Activated naive CD4-positive, alpha-beta T cell treated with anti-CD3 and anti-CD28 coated beads for 36 hours (primary cell): ENCODE measurements at regions of chr1 and their contacts with region 1.

Region 1: GRCh38 chr1:172745014-172745413 is 86.1 kb downstream of the FASLG start:
- DNase-seq: peak; percentile 64
- H3K4me3 Mint-ChIP-seq: no peak overlapping the region
- H3K27ac Mint-ChIP-seq: no peak overlapping the region
- H3K4me1 Mint-ChIP-seq: peaks cover 38% of the 10 kb centered on the region
- H3K27me3 Mint-ChIP-seq: no peaks in the 10 kb centered on the region

Region 2: DNA sequence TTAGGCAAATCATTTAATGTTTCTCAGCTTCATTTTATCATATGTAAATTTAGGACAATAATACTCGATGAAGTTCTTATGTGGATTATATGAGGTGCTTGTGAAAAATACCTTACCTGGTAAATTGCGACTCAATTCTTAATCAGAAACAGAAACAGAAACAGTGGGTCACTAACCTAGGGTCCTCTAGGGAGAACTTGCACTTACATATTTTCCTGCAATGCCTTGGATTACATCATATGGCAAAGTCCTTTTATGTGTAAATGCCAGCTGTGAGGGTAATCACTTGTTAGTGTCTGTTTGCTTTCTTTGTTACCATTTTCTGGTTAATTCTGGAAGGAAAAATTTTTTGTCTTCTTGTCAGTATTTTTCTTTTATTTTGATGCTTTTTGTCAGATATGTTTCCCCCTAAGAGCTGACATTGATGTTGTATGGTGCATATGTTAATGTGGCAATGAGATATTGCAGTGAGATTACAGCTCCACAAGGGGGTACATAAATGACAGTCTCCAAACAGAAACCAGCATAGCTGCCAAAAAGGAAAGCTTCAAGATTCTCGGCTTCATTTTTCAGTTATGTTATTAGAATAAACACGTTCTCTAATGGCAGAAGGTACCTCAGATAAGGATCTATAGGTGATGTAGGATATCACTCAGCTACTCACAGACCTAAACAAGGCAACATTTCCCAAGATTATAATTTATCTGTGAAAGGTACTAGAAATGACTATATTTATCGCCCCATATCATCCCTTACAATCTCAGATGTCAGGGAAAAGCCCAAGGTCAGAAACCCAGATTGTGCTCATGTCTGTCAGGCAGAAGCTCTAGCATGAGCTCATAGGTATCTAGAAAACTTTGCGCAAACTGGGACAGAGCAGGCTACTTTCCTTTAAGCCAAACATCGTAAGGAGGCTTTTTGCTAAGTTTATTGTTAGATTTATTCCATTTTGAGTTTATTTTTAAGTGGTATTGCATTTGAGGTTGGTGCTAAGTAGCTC is 33.7 kb after region 1 on chr1:
- CTCF ChIA-PET with region 1: interaction called, 16 read pairs
- intact Hi-C with region 1: loop called (anchors 1 kb)
- DNase-seq: no peak
- H3K4me3 Mint-ChIP-seq: no peak overlapping the region
- H3K27ac Mint-ChIP-seq: no peak overlapping the region
- H3K4me1 Mint-ChIP-seq: peaks cover 16% of the 10 kb centered on the region
- H3K27me3 Mint-ChIP-seq: no peaks in the 10 kb centered on the region

Region 3: DNA sequence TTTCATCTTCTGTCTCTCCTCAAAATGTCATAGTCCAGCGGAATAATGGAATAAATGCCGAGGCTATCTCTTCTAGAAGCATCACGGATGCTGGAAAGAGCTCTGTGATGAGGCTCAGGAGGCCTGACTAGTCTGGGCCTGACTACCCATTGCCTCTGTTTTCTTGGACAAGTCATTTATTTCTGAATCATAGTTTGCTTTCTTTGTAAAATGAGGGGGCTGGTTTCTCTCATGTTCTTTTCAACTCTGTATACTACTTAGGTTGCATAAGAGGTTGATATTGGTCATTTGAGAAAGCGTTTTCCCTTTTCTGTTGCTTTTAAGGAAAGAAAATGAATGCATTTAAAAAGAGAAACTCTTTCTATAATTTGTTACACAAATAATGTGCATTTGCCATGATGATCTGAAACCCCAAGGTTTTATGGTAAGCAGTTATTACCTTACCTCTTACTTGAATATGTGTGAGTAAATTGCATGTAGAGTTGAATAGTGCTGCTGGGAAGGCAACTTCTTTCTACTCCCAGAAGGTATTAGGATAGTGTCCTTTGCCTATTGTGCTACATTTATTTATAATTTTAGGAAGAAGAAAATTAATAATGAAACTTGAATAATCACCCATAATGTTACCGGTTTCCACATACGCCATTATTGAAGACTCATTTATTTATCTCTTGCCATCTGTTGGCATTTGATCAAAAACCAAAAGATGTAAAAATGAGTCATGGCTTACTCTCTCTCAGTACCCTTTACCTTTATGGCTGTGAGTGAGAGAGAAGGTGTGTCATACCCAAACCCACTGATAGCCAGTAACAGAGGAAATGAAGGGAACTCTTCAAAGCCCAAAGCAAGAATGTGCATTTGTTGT is 93.0 kb after region 1 on chr1:
- CTCF ChIA-PET with region 1: interaction called, 5 read pairs
- intact Hi-C with region 1: loop called (anchors 1 kb)
- DNase-seq: peak; percentile 46
- H3K4me3 Mint-ChIP-seq: no peak overlapping the region
- H3K27ac Mint-ChIP-seq: no peak overlapping the region
- H3K4me1 Mint-ChIP-seq: peaks cover 19% of the 10 kb centered on the region
- H3K27me3 Mint-ChIP-seq: peaks cover 25% of the 10 kb centered on the region

Region 4: GRCh38 chr1:173043253-173043652 is 298.2 kb after region 1 on chr1:
- CTCF ChIA-PET with region 1: interaction called, 3 read pairs
- intact Hi-C with region 1: loop called (anchors 5 kb)
- DNase-seq: no peak
- H3K4me3 Mint-ChIP-seq: no peak overlapping the region
- H3K27ac Mint-ChIP-seq: no peak overlapping the region
- H3K4me1 Mint-ChIP-seq: peaks cover 12% of the 10 kb centered on the region
- H3K27me3 Mint-ChIP-seq: no peaks in the 10 kb centered on the region

Region 5: GRCh38 chr1:173082913-173083312 is 337.9 kb after region 1 on chr1:
- CTCF ChIA-PET with region 1: no interaction called
- intact Hi-C with region 1: no loop called
- DNase-seq: no peak
- H3K4me3 Mint-ChIP-seq: no peak overlapping the region
- H3K27ac Mint-ChIP-seq: no peak overlapping the region
- H3K4me1 Mint-ChIP-seq: no peaks in the 10 kb centered on the region
- H3K27me3 Mint-ChIP-seq: peaks cover 2% of the 10 kb centered on the region

Region 6: GRCh38 chr1:173409613-173410012 is 664.6 kb after region 1 on chr1:
- CTCF ChIA-PET with region 1: no interaction called
- intact Hi-C with region 1: loop called (anchors 1 kb)
- DNase-seq: no peak
- H3K4me3 Mint-ChIP-seq: no peak overlapping the region
- H3K27ac Mint-ChIP-seq: no peak overlapping the region
- H3K4me1 Mint-ChIP-seq: peaks cover 36% of the 10 kb centered on the region
- H3K27me3 Mint-ChIP-seq: no peaks in the 10 kb centered on the region

Region 7: GRCh38 chr1:173925306-173926242 is 1180.6 kb after region 1 on chr1:
- CTCF ChIA-PET with region 1: no interaction called
- intact Hi-C with region 1: loop called (anchors 10 kb)
- DNase-seq: no peak
- H3K4me3 Mint-ChIP-seq: no peak overlapping the region
- H3K27ac Mint-ChIP-seq: no peak overlapping the region
- H3K4me1 Mint-ChIP-seq: no peaks in the 10 kb centered on the region
- H3K27me3 Mint-ChIP-seq: no peaks in the 10 kb centered on the region

Region 8: GRCh38 chr1:174743654-174744561 is 1998.9 kb after region 1 on chr1:
- CTCF ChIA-PET with region 1: no interaction called
- intact Hi-C with region 1: loop called (anchors 10 kb)
- DNase-seq: no peak
- H3K4me3 Mint-ChIP-seq: no peak overlapping the region
- H3K27ac Mint-ChIP-seq: no peak overlapping the region
- H3K4me1 Mint-ChIP-seq: peaks cover 10% of the 10 kb centered on the region
- H3K27me3 Mint-ChIP-seq: no peaks in the 10 kb centered on the region